HepG2 (cell line): ENCODE measurements at regions of chr7 and their contacts with region 1.

Region 1: DNA sequence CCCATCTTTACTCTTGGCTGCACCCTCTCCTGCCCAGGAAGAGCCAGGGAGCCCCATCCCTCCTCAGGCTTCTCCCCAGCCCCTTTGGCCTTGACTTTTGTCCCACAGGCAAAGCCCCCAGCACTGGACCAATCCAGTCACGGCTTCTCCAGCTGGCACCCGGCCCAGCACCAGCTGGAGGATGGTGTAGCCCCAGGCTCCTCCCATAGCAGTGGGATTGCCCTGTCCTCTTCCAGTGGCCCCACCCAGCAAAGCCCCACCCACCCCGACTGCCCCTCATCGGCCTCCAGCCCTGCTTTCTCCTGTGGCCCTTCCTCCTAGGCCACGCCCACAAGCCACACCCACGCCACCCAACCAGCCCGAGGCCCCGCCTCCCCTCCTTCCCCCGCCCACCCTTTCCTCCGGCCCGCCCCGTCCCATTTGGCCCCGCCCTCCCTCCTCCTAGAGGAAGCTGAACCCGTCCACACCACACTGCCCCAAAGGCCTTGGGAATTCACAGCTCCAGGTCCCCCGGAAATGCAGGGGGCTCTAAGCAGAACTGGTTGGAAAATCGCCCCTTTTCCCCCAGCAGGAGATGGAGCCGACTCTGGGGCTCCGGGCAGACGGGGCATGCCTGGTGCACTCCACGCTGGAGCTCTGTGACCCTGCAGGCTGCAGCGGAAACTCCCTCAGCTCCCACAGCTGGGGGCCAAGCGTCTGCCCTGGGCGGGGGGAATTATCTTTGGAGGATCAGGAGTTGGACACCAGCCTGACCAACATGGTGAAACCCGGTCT is 25.2 kb downstream of the GET4 start:
- DNase-seq: peak; percentile 85
- ATAC-seq: peak; percentile 80
- H3K4me3 ChIP-seq: peak overlapping the region in 1 of 3 experiments; percentile 43; a peak in 1 of 6 replicates
- H3K27ac ChIP-seq: peak overlapping the region; percentile 70
- H3K4me1 ChIP-seq: peaks cover 16% of the 10 kb centered on the region
- H3K27me3 ChIP-seq: no peaks in the 10 kb centered on the region
- CTCF ChIP-seq: no peak
- EP300 ChIP-seq: 0 out of 4 replicates have a peak, but pooled peaks of 1 of the 2 experiments have one; percentile 36
- POLR2A ChIP-seq: no peak
- RAD21 ChIP-seq: no peak

Region 2: GRCh38 chr7:604001-604883 is 297.3 kb before region 1 on chr7:
- CTCF ChIA-PET with region 1: no interaction called
- POLR2A ChIA-PET with region 1: no interaction called
- in situ Hi-C with region 1: no loop called
- intact Hi-C with region 1: no loop called
- DNase-seq: no peak
- ATAC-seq: no peak
- H3K4me3 ChIP-seq: no peak overlapping the region
- H3K27ac ChIP-seq: no peak overlapping the region
- H3K4me1 ChIP-seq: peaks cover 46% of the 10 kb centered on the region
- H3K27me3 ChIP-seq: no peaks in the 10 kb centered on the region
- CTCF ChIP-seq: no peak
- EP300 ChIP-seq: no peak
- POLR2A ChIP-seq: no peak
- RAD21 ChIP-seq: no peak

Region 3: GRCh38 chr7:620052-620451 is 281.5 kb before region 1 on chr7:
- CTCF ChIA-PET with region 1: no interaction called
- POLR2A ChIA-PET with region 1: no interaction called
- in situ Hi-C with region 1: no loop called
- intact Hi-C with region 1: no loop called
- DNase-seq: no peak
- ATAC-seq: no peak
- H3K4me3 ChIP-seq: no peak overlapping the region
- H3K27ac ChIP-seq: no peak overlapping the region
- H3K4me1 ChIP-seq: peaks cover 33% of the 10 kb centered on the region
- H3K27me3 ChIP-seq: no peaks in the 10 kb centered on the region
- CTCF ChIP-seq: no peak
- EP300 ChIP-seq: no peak
- POLR2A ChIP-seq: no peak
- RAD21 ChIP-seq: no peak

Region 4: GRCh38 chr7:726084-726853 is 175.3 kb before region 1 on chr7 and contains the start of gene DNAAF5:
- CTCF ChIA-PET with region 1: no interaction called
- POLR2A ChIA-PET with region 1: no interaction called
- in situ Hi-C with region 1: no loop called
- intact Hi-C with region 1: no loop called
- DNase-seq: peak; percentile 79
- ATAC-seq: peak; percentile 86
- H3K4me3 ChIP-seq: peak within 1 kb of the TSS; percentile 80 to 99 (median 81)
- H3K27ac ChIP-seq: peak within 1 kb of the TSS; percentile 68
- H3K4me1 ChIP-seq: peaks cover 50% of the 10 kb centered on the region
- H3K27me3 ChIP-seq: no peaks in the 10 kb centered on the region; a peak in 1 of 5 replicates
- CTCF ChIP-seq: peak; percentile 35; the same call in 1 of the 2 replicates
- EP300 ChIP-seq: no peak
- POLR2A ChIP-seq: peak in 1 of 2 experiments; percentile 53; a peak in 2 of 4 replicates
- RAD21 ChIP-seq: peak; percentile 50; the same call in 1 of the 2 replicates
- total RNA-seq, gene DNAAF5: 21.5 and 24.2 TPM in 2 replicates

Region 5: DNA sequence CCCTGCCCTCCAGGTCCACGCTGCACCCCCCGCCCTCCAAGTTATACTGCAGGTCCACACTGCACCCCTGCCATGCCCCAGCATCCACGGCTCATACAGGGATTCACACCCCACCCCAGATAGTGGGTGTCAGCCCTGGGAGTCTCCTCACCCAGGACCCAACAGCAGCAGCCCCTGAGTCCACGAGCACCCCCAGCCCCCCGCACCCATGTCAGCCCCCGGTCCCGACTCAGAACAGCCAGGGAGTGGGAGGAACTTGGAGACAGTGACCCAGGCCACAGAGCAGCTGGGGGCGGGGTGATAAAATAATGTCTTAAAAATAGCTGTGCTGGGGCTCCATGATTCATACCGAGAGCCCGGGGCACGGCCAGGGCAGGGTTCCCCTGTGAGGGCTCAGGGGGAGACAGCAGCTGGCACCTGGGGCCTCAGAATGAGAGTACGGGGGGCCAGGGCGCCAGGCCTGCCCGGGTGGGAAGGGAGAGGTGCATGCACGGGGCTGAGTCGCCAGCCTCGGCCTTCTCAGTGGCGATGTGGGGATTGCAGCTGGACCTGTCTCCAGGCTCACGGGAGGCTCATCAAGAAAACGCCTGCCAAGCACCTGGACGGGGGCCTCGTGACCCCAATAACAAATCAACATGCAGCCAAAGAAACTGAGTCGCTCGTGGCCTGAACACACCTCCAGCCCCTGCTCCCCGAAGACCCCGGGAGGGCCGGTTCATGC is 23.1 kb after region 1 on chr7:
- CTCF ChIA-PET with region 1: no interaction called
- POLR2A ChIA-PET with region 1: interaction called, 28 read pairs
- in situ Hi-C with region 1: no loop called
- intact Hi-C with region 1: no loop called
- DNase-seq: no peak
- ATAC-seq: no peak
- H3K4me3 ChIP-seq: no peak overlapping the region
- H3K27ac ChIP-seq: no peak overlapping the region
- H3K4me1 ChIP-seq: peaks cover 61% of the 10 kb centered on the region
- H3K27me3 ChIP-seq: no peaks in the 10 kb centered on the region
- CTCF ChIP-seq: no peak
- EP300 ChIP-seq: no peak
- POLR2A ChIP-seq: no peak
- RAD21 ChIP-seq: no peak

Region 6: DNA sequence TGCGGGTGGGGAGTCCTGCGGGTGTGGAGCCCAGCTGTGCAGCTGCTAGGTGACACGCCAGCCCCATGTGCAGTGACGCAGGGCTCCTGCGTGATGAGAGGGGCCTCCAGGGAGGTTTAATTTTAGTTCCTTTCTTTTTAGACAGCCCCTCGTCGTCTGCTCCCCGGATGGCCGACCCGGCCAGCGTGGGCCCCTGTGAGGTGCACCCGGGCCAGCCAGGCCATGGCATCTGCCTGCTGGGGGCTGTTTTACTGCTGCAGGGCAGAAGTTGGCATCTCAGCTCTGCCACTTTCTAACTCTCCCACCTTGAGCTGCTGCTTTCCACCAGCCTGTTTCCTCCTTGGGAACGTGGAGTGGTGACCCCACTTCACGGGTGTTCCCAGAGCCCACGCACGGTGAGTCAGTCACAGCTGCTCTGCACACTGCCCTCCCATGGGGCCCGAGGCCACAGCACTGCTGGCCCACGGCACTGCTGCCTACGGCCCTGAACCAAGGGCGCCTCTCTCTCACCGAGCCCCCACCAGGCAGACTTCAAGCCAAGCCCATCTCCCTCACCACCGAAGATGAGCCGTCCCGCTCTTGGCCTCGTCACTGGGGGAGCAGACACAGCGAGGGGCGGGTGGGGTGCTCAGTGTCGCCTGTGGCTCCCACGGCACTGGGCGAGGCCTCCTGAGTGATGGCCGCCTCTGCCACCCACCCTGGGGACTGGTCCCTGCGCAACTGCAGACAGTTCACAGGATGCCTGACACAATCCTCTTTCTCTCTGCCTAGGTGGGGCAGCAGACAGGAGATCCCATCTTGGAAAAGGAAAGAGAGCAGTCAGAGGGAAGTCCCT is 102.7 kb after region 1 on chr7:
- CTCF ChIA-PET with region 1: no interaction called
- POLR2A ChIA-PET with region 1: no interaction called
- in situ Hi-C with region 1: no loop called
- intact Hi-C with region 1: no loop called
- DNase-seq: no peak
- ATAC-seq: peak; percentile 15; the same call in 2 of the 3 replicates
- H3K4me3 ChIP-seq: no peak overlapping the region
- H3K27ac ChIP-seq: no peak overlapping the region
- H3K4me1 ChIP-seq: no peaks in the 10 kb centered on the region
- H3K27me3 ChIP-seq: no peaks in the 10 kb centered on the region
- CTCF ChIP-seq: no peak
- EP300 ChIP-seq: no peak
- POLR2A ChIP-seq: no peak
- RAD21 ChIP-seq: no peak